Sigmoid colon (tissue), 7 donors: ENCODE measurements at regions of chr6 and their contacts with region 1.

Region 1: DNA sequence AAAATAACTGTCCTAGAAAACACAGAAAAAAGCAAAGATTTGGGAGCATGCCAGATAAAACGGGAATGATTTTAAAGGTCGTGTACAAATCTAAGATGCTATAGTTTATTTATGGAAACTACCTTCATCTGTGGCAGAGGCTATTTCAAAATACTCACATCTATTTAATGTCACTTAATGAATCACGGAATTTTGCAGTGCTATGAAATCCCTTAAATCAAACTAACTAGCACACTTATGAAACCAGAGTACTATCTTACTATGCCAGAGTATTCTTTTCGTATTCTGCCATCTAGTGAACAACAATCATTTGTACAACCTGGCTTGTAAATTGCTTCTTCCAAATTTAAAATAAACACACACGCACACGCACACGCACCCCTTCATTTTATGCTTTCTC is 77.9 kb upstream of the BMP5 start:
- DNase-seq: no peak
- H3K4me3 ChIP-seq: peak overlapping the region in 1 of 4 donors; percentile 3
- H3K27ac ChIP-seq: no peak overlapping the region
- H3K4me1 ChIP-seq: peaks cover 0 to 7% (median 2%) of the 10 kb centered on the region in 4 donors
- H3K27me3 ChIP-seq: no peaks in the 10 kb centered on the region
- CTCF ChIP-seq: peak; percentile 13 to 45 (median 34)
- EP300 ChIP-seq: no peak
- POLR2A ChIP-seq: no peak

Region 2: DNA sequence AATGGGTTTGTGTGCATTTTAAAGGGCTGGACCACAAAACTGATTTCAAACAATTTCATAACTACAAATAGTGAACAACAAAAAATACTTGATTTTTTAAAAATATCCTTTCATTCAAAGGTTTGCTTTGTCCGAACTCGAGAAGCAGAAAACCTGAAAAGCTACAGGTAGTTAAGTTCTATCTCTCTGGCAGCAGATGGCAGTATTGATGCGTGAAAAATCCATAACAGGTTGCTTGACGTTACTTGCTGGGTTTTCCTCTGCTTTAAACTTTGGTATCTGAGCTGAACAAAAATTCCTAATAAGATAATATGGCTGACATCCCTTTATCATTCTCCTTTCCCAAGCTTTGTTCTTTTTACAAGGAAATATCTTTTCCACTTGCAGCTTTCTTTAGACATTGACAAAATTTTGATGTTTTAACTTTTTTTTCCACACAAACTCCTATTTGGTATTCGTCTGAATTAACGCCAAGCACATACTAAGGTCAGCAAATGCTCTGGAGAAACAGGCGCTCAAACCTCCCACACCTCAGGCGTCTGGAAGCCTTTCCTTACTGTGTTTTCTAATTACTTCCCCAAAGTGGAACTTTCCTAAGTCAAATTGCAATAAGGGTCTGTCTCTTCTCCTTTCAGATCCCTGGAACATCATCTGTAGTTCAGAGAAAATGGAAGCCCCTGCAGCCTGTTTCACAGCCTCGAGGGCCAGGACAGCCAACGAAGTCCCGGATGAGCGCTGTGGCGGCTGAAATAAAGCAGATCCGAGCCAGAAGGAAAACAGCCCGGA is 676.4 kb before region 1 on chr6:
- intact Hi-C with region 1: loop called (anchors 10 kb)
- DNase-seq: no peak
- H3K4me3 ChIP-seq: peak overlapping the region in 2 of 4 donors; percentile 9
- H3K27ac ChIP-seq: no peak overlapping the region
- H3K4me1 ChIP-seq: no peaks in the 10 kb centered on the region
- H3K27me3 ChIP-seq: no peaks in the 10 kb centered on the region
- CTCF ChIP-seq: peak in 2 of 4 experiments; percentile 30 to 47
- EP300 ChIP-seq: no peak
- POLR2A ChIP-seq: no peak

Region 3: GRCh38 chr6:55445648-55446204 is 507.6 kb before region 1 on chr6:
- intact Hi-C with region 1: loop called (anchors 1 kb)
- DNase-seq: no peak
- H3K4me3 ChIP-seq: no peak overlapping the region
- H3K27ac ChIP-seq: no peak overlapping the region
- H3K4me1 ChIP-seq: no peaks in the 10 kb centered on the region
- H3K27me3 ChIP-seq: no peaks in the 10 kb centered on the region
- CTCF ChIP-seq: peak; percentile 16 to 56 (median 42)
- EP300 ChIP-seq: no peak
- POLR2A ChIP-seq: no peak

Region 4: DNA sequence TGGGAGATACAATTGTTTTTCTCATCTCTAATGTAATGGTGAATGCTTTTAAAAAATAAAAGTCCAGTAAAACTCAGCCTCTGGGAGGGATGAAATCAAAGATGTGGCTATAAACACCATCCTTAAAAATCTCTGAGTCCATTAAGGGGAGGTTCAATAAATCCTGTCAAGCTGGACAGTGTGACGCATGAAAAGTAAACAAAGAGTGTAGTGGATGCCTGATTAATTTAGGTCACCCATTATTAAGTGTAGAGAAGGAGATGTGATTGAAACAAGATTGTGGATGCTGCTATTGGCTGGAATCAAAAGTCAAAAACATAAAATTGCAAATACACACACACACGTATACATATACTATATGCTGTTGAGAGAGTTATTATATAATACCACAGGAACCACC is 178.1 kb after region 1 on chr6:
- intact Hi-C with region 1: no loop called
- DNase-seq: no peak
- H3K4me3 ChIP-seq: no peak overlapping the region
- H3K27ac ChIP-seq: no peak overlapping the region
- H3K4me1 ChIP-seq: no peaks in the 10 kb centered on the region
- H3K27me3 ChIP-seq: no peaks in the 10 kb centered on the region
- CTCF ChIP-seq: no peak
- EP300 ChIP-seq: no peak
- POLR2A ChIP-seq: no peak